ENCODE measurements at regions of chr5 and their contacts with region 1.

Region 1: GRCh38 chr5:74927336-74927735 is 61.1 kb upstream of the FAM169A start:
- DNase-seq: no peak
- H3K4me3 ChIP-seq: no peak overlapping the region
- H3K27ac ChIP-seq: no peak overlapping the region
- H3K4me1 ChIP-seq: no peaks in the 10 kb centered on the region
- H3K27me3 ChIP-seq: no peaks in the 10 kb centered on the region
- CTCF ChIP-seq: no peak

Region 2: GRCh38 chr5:74613283-74613682 is 314.1 kb before region 1 on chr5:
- CTCF ChIA-PET with region 1: no interaction called
- dilution Hi-C with region 1: no loop called
- in situ Hi-C with region 1: no loop called
- intact Hi-C with region 1: no loop called
- DNase-seq: no peak
- H3K4me3 ChIP-seq: no peak overlapping the region
- H3K27ac ChIP-seq: no peak overlapping the region
- H3K4me1 ChIP-seq: no peaks in the 10 kb centered on the region
- H3K27me3 ChIP-seq: no peaks in the 10 kb centered on the region
- CTCF ChIP-seq: no peak

Region 3: DNA sequence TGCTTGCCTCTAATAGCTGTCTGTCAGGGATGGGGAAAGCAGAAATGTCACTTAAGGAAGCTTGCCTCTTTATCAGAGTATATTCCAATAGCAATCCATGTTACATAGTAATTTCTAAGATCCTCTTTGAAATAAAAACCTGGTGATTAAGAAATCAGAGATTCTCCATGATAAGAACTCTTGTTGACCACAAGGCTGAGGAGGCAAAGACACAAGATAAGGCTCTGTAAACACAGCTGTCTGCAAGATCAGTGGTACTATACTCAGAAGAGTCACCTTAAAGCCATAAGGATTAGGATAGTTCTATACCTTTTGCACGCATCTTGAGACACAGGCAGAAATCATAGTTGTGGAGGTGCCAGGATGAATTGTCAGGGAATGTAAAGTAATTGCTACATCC is 202.0 kb before region 1 on chr5:
- CTCF ChIA-PET with region 1: no interaction called
- dilution Hi-C with region 1: no loop called
- in situ Hi-C with region 1: no loop called
- intact Hi-C with region 1: no loop called
- DNase-seq: no peak
- H3K4me3 ChIP-seq: no peak overlapping the region
- H3K27ac ChIP-seq: no peak overlapping the region
- H3K4me1 ChIP-seq: no peaks in the 10 kb centered on the region
- H3K27me3 ChIP-seq: no peaks in the 10 kb centered on the region
- CTCF ChIP-seq: no peak

Region 4: GRCh38 chr5:75071100-75071499 is 143.8 kb after region 1 on chr5:
- CTCF ChIA-PET with region 1: interaction called, 34 read pairs
- dilution Hi-C with region 1: no loop called
- in situ Hi-C with region 1: no loop called
- intact Hi-C with region 1: no loop called
- DNase-seq: no peak
- H3K4me3 ChIP-seq: no peak overlapping the region
- H3K27ac ChIP-seq: no peak overlapping the region
- H3K4me1 ChIP-seq: peaks cover 4% of the 10 kb centered on the region
- H3K27me3 ChIP-seq: no peaks in the 10 kb centered on the region
- CTCF ChIP-seq: no peak

Region 5: DNA sequence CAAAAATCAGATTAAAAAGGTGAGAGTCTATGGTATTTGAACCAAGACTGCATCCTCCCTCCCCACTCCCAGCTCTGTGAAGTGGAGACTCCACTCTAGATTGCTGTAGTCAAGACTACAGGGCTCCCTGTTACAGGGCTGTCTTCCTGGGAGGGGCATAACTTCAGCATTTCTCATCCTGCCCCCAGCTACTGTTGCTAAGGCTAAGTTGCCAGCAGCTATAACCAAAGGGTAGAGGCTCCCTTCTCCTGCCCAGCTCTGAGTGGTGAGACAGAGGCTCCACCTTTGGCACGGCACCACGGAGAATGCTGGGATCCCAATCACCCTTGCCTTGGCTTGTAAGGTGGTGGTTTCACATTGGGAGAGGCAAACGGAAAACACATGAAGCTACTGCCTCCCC is 164.3 kb after region 1 on chr5:
- CTCF ChIA-PET with region 1: interaction called, 14 read pairs
- dilution Hi-C with region 1: no loop called
- in situ Hi-C with region 1: no loop called
- intact Hi-C with region 1: no loop called
- DNase-seq: peak; percentile 93
- H3K4me3 ChIP-seq: no peak overlapping the region
- H3K27ac ChIP-seq: peak overlapping the region; percentile 83
- H3K4me1 ChIP-seq: peaks cover 44% of the 10 kb centered on the region
- H3K27me3 ChIP-seq: no peaks in the 10 kb centered on the region
- CTCF ChIP-seq: no peak

Measured in mammary epithelial cell (primary cell).